Mammary epithelial cell (primary cell): ENCODE measurements at regions of chr2 and their contacts with region 1.

Region 1: DNA sequence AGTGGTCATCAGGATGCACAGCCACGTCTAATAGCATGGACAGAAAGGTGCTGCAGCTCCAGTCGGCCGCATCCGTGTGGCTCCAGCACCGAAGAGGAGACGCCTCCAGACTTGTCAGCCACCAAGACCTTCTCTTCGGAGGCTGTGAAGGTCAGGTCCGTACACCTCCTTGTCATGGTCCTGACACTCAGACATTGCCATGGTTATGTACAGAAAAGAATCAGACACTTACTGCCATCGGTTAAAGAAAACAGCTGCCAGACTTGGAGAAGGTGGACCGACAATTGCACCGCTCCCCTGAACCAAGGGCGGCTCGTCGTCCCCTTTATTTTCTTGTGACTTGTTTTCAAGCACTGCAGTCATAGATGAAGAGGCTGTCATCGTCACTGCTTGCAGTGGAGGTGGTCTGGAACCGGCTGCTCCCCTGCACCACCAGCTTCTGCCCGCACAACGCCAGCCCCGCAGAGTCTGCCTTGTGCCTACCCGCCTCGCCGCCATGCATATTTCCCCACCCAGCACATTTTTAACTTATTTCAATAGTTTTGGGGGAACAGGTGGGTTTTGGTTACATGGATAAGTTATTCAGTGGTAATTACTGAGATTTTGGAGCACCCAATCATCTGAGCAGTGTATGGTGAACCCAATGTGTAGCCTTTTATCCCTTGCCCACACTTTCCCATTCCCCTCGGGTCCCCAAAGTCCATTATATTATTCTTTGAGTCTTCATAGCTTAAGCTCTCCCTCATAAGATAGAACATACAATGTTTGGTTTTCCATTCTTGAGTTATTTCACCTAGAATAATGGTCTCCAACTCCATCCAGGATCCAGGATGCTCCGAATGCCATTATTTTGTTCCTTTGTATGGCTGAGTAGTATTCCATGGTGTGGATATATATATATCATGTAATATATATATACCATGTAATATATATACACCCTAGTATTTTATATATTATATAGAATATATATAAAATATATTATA is 18.1 kb downstream of the FBXO48 start:
- DNase-seq: no peak
- H3K4me3 ChIP-seq: no peak overlapping the region
- H3K27ac ChIP-seq: no peak overlapping the region
- H3K4me1 ChIP-seq: no peaks in the 10 kb centered on the region
- H3K27me3 ChIP-seq: no peaks in the 10 kb centered on the region
- CTCF ChIP-seq: no peak

Region 2: GRCh38 chr2:68506170-68506569 is 57.2 kb after region 1 on chr2:
- CTCF ChIA-PET with region 1: no interaction called
- dilution Hi-C with region 1: no loop called
- in situ Hi-C with region 1: no loop called
- intact Hi-C with region 1: no loop called
- DNase-seq: no peak
- H3K4me3 ChIP-seq: no peak overlapping the region
- H3K27ac ChIP-seq: no peak overlapping the region
- H3K4me1 ChIP-seq: no peaks in the 10 kb centered on the region
- H3K27me3 ChIP-seq: no peaks in the 10 kb centered on the region
- CTCF ChIP-seq: no peak

Region 3: GRCh38 chr2:68612765-68613519 is 164.0 kb after region 1 on chr2:
- CTCF ChIA-PET with region 1: interaction called, 15 read pairs
- dilution Hi-C with region 1: no loop called
- in situ Hi-C with region 1: no loop called
- intact Hi-C with region 1: no loop called
- DNase-seq: no peak
- H3K4me3 ChIP-seq: no peak overlapping the region
- H3K27ac ChIP-seq: no peak overlapping the region
- H3K4me1 ChIP-seq: no peaks in the 10 kb centered on the region
- H3K27me3 ChIP-seq: peaks cover 2% of the 10 kb centered on the region
- CTCF ChIP-seq: no peak